HepG2 (cell line): ENCODE measurements at regions of chr10 and their contacts with region 1.

Region 1: DNA sequence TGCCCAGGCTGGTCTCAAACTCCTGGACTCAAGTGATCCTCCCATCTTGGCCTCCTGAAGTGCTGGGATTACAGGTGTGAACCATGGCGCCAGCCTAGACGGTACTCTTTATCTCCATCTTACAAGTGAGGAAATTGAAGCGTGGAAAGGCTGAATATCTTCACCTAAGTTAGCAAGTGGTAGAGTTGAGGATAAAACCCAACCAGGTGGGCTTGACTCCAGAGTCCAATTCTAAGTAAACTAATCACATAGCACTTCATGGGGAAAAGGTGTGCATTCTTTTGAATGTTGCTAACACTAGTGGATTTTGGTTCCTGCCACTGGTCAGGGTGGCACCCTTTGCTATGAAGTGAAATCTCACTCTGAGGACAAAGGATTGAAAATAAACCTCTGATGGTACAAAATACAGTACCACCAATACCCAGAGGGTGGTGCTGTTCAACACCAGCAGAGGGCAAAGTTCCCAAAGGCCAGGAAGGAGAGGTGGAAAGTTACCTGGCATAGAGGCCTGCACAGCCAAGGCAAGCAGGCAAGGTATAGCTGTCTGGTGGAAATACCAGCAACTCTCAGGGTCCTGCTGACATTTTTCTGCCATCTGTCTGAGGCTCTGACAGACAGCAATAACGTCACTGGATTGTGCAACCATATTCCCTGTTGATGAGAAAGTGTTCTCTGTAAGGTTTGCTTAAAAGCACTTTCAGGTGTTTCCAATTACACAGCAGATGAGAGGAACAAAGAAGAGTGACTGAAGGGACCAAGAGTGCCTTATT is 17.6 kb downstream of the ZDHHC16 start:
- DNase-seq: peak; percentile 87
- ATAC-seq: peak; percentile 88
- H3K4me3 ChIP-seq: no peak overlapping the region
- H3K27ac ChIP-seq: peak overlapping the region; percentile 55
- H3K4me1 ChIP-seq: peaks cover 25% of the 10 kb centered on the region
- H3K27me3 ChIP-seq: no peaks in the 10 kb centered on the region
- CTCF ChIP-seq: peak; percentile 91
- EP300 ChIP-seq: peak in 1 of 2 experiments; percentile 67; a peak in 1 of 4 replicates
- POLR2A ChIP-seq: no peak
- RAD21 ChIP-seq: peak; percentile 88

Region 2: GRCh38 chr10:97612386-97612785 is 148.8 kb after region 1 on chr10:
- CTCF ChIA-PET with region 1: no interaction called
- POLR2A ChIA-PET with region 1: no interaction called
- in situ Hi-C with region 1: no loop called
- intact Hi-C with region 1: loop called (anchors 5 kb)
- DNase-seq: peak; percentile 45
- ATAC-seq: peak; percentile 91
- H3K4me3 ChIP-seq: no peak overlapping the region
- H3K27ac ChIP-seq: no peak overlapping the region
- H3K4me1 ChIP-seq: no peaks in the 10 kb centered on the region
- H3K27me3 ChIP-seq: no peaks in the 10 kb centered on the region
- CTCF ChIP-seq: peak; percentile 72
- EP300 ChIP-seq: no peak
- POLR2A ChIP-seq: no peak
- RAD21 ChIP-seq: peak; percentile 68